ENCODE measurements at regions of chr1 and their contacts with region 1.

Region 1: GRCh38 chr1:91697416-91697815 is 188.5 kb downstream of the TGFBR3 start:
- DNase-seq: peak; percentile 24
- ATAC-seq: peak; percentile 90
- H3K4me3 ChIP-seq: peak overlapping the region; percentile 18; the same call in 1 of the 2 replicates
- H3K27ac ChIP-seq: no peak overlapping the region
- H3K4me1 ChIP-seq: peaks cover 12% of the 10 kb centered on the region; the same call in 1 of the 2 replicates
- H3K27me3 ChIP-seq: no peaks in the 10 kb centered on the region
- CTCF ChIP-seq: no peak
- EP300 ChIP-seq: no peak
- POLR2A ChIP-seq: no peak
- RAD21 ChIP-seq: no peak

Region 2: GRCh38 chr1:91707890-91708218 is 10.4 kb after region 1 on chr1:
- CTCF ChIA-PET with region 1: interaction called, 10 read pairs
- POLR2A ChIA-PET with region 1: no interaction called
- RAD21 ChIA-PET with region 1: interaction called, 4 read pairs
- SMC1A ChIA-PET with region 1: interaction called, 3 read pairs
- in situ Hi-C with region 1: no loop called
- intact Hi-C with region 1: no loop called
- DNase-seq: no peak
- ATAC-seq: no peak
- H3K4me3 ChIP-seq: no peak overlapping the region
- H3K27ac ChIP-seq: no peak overlapping the region
- H3K4me1 ChIP-seq: peaks cover 28% of the 10 kb centered on the region
- H3K27me3 ChIP-seq: no peaks in the 10 kb centered on the region
- CTCF ChIP-seq: no peak
- EP300 ChIP-seq: no peak
- POLR2A ChIP-seq: no peak
- RAD21 ChIP-seq: no peak

Measured in GM12878 (cell line).